ENCODE measurements at regions of chr10 and their contacts with region 1.

Region 1: DNA sequence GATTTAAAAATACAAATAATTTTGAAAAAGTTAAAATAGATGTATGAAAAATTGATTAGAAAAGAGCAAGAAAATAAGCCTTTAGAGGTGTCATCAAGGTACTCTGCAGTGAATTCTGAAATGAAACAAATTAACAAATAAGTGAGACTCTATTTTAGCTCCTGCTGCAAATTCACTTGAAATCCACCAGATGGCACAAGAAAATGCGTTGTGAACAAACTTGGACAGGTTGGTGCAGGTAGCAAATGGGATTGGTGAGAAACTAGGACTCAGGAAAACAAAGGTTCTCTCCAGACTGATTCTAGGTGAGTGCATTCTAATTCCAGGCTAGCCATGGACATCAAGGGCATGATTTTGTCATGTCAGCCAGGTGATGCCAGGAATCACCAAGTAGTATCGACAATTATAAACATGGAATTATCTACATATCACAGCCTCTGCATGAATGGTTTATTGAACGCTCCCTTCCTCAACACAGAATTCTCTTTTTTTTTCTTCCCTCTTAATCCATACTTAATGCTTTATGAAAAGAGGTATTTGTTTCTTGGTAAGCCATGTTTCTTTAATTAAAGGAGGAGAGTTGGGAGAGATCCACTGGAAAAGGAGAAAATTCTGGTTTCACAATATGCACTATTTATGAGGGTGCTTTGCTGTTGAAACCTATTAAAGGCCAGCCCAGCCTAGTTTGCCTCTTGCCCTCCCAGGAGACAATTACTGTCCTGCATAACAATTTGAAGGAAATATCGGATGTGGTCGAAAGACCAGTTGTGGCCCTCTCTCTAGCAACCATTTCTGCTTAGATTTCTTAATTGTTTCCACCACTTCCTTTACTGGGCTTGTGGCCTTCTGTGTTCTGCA is 118.1 kb downstream of the ZNF365 start:
- DNase-seq: peak; percentile 25
- ATAC-seq: peak; percentile 75
- H3K4me3 ChIP-seq: no peak overlapping the region
- H3K27ac ChIP-seq: no peak overlapping the region
- H3K4me1 ChIP-seq: no peaks in the 10 kb centered on the region
- H3K27me3 ChIP-seq: no peaks in the 10 kb centered on the region; a peak in 1 of 4 replicates
- CTCF ChIP-seq: peak; percentile 56 to 71 (median 71); a peak in 5 of 6 replicates
- EP300 ChIP-seq: no peak
- POLR2A ChIP-seq: no peak
- RAD21 ChIP-seq: peak; percentile 94

Region 2: GRCh38 chr10:62456611-62457101 is 35.6 kb before region 1 on chr10:
- CTCF ChIA-PET with region 1: interaction called, 13 read pairs
- POLR2A ChIA-PET with region 1: no interaction called
- RAD21 ChIA-PET with region 1: interaction called, 6 read pairs
- SMC1A ChIA-PET with region 1: interaction called, 3 read pairs
- in situ Hi-C with region 1: no loop called
- intact Hi-C with region 1: no loop called
- DNase-seq: peak; percentile 86
- ATAC-seq: peak; percentile 97
- H3K4me3 ChIP-seq: no peak overlapping the region
- H3K27ac ChIP-seq: no peak overlapping the region
- H3K4me1 ChIP-seq: peaks cover 21% of the 10 kb centered on the region
- H3K27me3 ChIP-seq: peaks cover 0 to 2% of the 10 kb centered on the region in 2 experiments; a peak in 1 of 4 replicates
- CTCF ChIP-seq: no peak
- EP300 ChIP-seq: peak; percentile 90 to 96
- POLR2A ChIP-seq: no peak
- RAD21 ChIP-seq: no peak

Region 3: DNA sequence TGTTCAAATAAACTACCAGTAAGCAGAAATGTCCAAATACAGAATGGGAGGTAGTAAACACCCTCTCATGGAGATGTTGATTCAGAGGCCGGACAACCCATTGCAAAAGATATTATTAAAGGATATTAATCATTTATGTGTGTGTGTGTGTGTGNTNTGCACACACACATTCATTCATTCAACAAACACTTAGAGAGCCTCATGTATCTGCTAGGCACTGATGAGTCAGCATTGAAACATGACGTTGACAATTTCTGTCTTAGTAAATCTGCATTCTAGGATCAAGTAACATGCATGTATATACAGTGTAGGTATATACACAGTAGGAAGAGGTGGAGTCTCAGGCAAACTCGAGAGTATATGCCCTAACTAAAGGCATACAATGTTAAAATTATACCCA is 68.9 kb after region 1 on chr10:
- CTCF ChIA-PET with region 1: interaction called, 36 read pairs
- POLR2A ChIA-PET with region 1: no interaction called
- RAD21 ChIA-PET with region 1: interaction called, 5 read pairs
- SMC1A ChIA-PET with region 1: interaction called, 16 read pairs
- in situ Hi-C with region 1: no loop called
- intact Hi-C with region 1: no loop called
- DNase-seq: no peak
- ATAC-seq: no peak
- H3K4me3 ChIP-seq: no peak overlapping the region
- H3K27ac ChIP-seq: no peak overlapping the region
- H3K4me1 ChIP-seq: no peaks in the 10 kb centered on the region; the same call in 1 of the 2 replicates
- H3K27me3 ChIP-seq: peaks cover 2 to 5% of the 10 kb centered on the region in 2 experiments; a peak in 2 of 4 replicates
- CTCF ChIP-seq: no peak
- EP300 ChIP-seq: no peak
- POLR2A ChIP-seq: no peak
- RAD21 ChIP-seq: no peak

Region 4: DNA sequence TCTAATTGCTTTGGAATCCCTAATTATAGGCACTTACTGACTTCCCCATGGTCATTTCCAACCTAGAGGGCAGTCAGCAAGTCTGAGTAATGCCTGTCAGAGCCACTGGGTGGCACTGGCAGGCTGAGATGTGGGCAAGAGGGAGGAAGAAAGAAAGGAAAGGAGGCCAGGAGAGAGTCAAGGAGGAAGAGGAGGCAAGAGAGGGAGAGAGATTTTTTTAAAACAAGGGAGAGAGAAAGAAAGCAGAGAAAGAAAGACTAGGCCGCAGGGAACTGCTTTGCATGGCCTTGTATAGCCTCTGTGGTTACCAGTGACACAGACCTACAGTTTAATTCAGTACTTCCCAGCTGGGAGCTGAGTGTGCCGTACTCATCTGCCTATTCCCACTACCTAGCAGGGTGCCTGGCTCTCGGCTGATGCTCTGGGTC is 101.9 kb after region 1 on chr10:
- CTCF ChIA-PET with region 1: interaction called, 29 read pairs
- POLR2A ChIA-PET with region 1: interaction called, 3 read pairs
- RAD21 ChIA-PET with region 1: interaction called, 35 read pairs
- SMC1A ChIA-PET with region 1: interaction called, 19 read pairs
- in situ Hi-C with region 1: no loop called
- intact Hi-C with region 1: loop called (anchors 1 kb)
- DNase-seq: peak; percentile 30
- ATAC-seq: peak; percentile 94
- H3K4me3 ChIP-seq: no peak overlapping the region
- H3K27ac ChIP-seq: no peak overlapping the region
- H3K4me1 ChIP-seq: peaks cover 7% of the 10 kb centered on the region
- H3K27me3 ChIP-seq: no peaks in the 10 kb centered on the region
- CTCF ChIP-seq: peak; percentile 90 to 97 (median 95)
- EP300 ChIP-seq: no peak
- POLR2A ChIP-seq: no peak
- RAD21 ChIP-seq: peak; percentile 100